ENCODE measurements at regions of chr16 and their contacts with region 1.

Region 1: DNA sequence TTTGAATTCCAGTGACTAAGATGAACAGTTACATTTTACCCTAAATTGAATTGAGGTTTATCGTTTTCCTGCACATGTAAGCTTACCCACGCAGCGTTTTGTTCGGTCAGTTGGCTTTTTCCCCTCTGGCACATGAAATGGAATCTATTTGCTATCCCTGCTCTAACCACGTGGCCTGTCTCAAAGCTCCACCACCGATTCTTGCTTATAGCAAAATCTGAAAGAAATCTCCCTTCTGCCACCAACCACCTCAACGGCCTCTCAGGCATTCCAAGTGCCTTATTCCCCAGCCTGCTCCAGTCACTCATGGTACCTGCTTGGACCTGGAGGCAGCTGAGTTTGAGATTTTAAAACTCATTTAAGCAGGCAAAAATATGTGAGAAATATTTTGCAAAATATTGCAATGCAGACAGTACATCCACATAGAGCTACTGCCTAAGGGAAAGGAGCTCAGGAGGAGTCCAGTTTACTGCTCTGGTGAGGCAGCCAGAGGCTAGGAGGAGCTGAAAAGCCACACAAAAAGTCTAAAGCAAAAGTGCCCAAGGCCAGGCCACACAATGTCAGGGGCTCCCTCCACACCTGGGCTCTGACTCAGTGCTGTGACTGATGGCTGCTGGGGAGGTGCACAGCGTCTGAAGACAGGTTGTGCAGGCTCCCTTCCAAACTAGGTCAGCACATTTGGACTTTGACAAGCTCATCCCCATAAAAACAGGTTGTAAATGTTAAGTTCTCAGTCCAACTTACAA is 26.4 kb downstream of the ARHGAP17 start:
- DNase-seq: peak in 2 of 4 donors; percentile 31 to 42
- ATAC-seq: peak; percentile 38
- H3K4me3 ChIP-seq: no peak overlapping the region
- H3K27ac ChIP-seq: peak overlapping the region; percentile 42 to 79
- H3K4me1 ChIP-seq: peaks cover 42 to 88% of the 10 kb centered on the region in 2 donors
- H3K27me3 ChIP-seq: no peaks in the 10 kb centered on the region
- CTCF ChIP-seq: no peak

Region 2: DNA sequence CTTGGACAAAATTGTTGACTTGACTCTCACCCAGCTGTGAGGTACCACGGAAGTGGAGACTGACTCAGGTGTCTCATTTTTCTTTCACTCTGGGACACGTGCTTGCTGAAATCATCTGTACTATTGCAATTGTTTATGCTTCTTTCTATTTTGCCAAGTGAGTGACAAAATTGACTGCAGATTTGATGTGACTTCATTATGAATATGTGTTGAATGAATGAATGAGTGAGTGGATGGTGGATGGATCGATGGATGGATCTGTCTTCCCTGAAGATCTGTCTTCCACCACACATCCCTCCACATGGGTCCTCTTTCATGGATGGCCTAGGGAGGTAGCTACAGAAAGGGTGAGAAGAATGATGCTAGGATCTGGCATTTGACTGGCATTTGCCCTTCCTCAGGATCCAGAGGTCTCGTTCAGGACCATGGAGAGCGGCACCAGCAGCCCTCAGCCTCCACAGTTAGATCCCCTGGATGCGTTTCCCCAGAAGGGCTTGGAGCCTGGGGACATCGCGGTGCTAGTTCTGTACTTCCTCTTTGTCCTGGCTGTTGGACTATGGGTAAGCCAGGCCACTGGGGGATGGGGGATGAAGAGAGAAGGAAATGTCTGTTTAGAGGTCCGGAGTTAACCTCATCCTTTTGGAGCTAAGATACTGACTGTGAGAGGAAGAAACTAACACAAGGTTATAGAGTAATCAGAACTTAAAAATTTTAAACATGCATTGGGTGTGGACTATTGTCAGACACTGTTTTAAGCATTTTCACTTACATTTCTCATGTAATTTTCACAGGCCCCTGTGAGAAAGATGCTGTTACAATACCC is 130.3 kb before region 1 on chr16:
- intact Hi-C with region 1: no loop called
- DNase-seq: peak in 3 of 4 donors; percentile 40 to 71 (median 44)
- ATAC-seq: peak; percentile 78
- H3K4me3 ChIP-seq: no peak overlapping the region
- H3K27ac ChIP-seq: no peak overlapping the region
- H3K4me1 ChIP-seq: no peaks in the 10 kb centered on the region
- H3K27me3 ChIP-seq: peaks cover 0 to 12% of the 10 kb centered on the region in 2 donors
- CTCF ChIP-seq: no peak

Region 3: DNA sequence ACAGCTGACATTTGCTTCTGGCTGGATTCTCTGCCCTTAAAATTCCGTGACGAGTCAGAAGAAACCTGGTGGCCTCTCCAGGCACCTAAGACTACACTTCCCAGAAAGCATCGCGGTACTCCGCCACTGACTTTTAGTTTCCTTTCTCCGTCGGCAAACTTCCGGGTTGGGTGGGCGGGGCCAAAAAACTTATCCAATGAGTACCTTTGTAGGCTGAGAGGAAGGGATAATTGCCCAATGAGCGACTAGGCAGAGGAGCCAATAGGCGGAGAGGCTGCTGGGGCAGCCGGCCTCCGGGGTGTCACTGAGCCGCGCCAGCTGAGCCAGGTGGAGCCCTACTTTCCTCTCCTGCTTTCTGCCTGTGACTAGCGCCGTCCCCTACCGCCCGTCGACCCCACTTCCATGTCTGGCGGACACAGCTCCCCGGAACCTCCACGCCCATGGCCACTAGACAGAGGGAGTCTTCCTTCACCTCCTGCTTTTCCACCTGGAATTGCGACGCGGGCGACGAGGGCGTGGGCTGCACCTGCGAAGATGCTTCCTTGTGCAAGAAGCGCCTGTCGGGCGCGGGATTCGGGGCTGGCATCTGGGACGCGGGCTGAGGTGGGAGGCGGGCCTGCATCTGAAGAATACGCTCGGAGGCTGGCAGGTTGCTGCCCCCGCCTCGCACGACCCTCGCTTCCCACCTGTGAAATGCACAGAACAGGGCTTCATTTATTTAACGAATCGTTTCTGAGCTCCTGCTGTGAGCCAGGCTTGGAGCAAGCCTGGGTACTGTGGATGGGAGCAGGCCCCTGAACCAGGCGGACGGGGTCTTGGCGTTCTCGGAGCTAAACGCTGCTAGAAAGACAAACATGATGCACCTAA is 42.9 kb after region 1 on chr16:
- intact Hi-C with region 1: loop called in 1 of 2 experiments (anchors 10 kb)
- DNase-seq: peak; percentile 90 to 97 (median 94)
- ATAC-seq: peak; percentile 98
- H3K4me3 ChIP-seq: peak overlapping the region; percentile 76 to 78
- H3K27ac ChIP-seq: peak overlapping the region; percentile 77 to 78
- H3K4me1 ChIP-seq: peaks cover 7 to 26% of the 10 kb centered on the region in 2 donors
- H3K27me3 ChIP-seq: no peaks in the 10 kb centered on the region
- CTCF ChIP-seq: no peak

Measured in left lung (tissue), 14 donors.